Transverse colon (tissue), 4 donors: ENCODE measurements at regions of chr19 and their contacts with region 1.

Region 1: DNA sequence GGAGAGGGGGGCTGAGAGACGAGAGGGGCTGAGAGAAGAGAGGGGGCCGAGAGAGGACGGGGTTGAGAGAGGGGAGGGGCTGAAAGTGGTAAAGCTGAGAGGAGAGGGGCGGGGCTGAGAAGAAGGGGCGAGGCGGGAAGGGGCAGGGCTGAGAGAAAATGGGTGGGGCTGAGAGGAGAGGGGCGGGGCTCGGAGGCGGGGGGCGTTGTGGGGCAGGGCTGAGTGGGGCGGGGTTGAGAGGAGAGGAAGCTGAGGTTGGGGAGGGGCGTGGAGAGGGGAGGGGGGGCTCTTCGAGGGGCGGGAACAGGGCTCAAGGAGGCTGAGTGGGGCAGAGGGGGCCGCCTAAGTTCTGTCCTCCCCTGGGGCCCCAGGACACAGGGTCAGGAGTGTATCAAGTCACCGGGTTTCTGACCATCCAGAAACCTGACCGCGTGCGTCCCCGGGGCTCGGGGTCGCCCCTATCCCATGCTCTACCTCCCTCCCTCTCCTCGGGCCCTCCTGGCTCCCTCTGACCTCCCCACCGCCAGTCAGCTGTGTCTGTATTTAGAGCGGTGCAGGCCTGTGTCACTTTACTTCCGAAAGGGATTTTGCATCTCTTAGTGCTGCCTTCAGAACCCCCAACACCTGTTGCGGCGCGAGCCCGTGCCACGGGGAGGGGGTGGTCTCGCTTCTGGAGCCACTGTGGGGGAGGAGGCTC is 38.6 kb upstream of the SEMA6B start:
- DNase-seq: peak; percentile 40
- H3K4me3 ChIP-seq: peak overlapping the region in 1 of 4 donors; percentile 2
- H3K27ac ChIP-seq: no peak overlapping the region
- H3K4me1 ChIP-seq: peaks cover 0 to 7% (median 6%) of the 10 kb centered on the region in 4 donors
- H3K27me3 ChIP-seq: peaks cover 75% of the 10 kb centered on the region
- CTCF ChIP-seq: no peak
- EP300 ChIP-seq: no peak
- POLR2A ChIP-seq: no peak

Region 2: GRCh38 chr19:4431808-4432674 is 166.1 kb before region 1 on chr19:
- in situ Hi-C with region 1: no loop called
- intact Hi-C with region 1: loop called (anchors 10 kb)
- DNase-seq: no peak
- H3K4me3 ChIP-seq: no peak overlapping the region
- H3K27ac ChIP-seq: peak overlapping the region in 1 of 4 donors; percentile 55
- H3K4me1 ChIP-seq: no peaks in the 10 kb centered on the region
- H3K27me3 ChIP-seq: no peaks in the 10 kb centered on the region
- CTCF ChIP-seq: no peak
- EP300 ChIP-seq: no peak
- POLR2A ChIP-seq: no peak